ENCODE measurements at regions of chr10 and their contacts with region 1.

Region 1: DNA sequence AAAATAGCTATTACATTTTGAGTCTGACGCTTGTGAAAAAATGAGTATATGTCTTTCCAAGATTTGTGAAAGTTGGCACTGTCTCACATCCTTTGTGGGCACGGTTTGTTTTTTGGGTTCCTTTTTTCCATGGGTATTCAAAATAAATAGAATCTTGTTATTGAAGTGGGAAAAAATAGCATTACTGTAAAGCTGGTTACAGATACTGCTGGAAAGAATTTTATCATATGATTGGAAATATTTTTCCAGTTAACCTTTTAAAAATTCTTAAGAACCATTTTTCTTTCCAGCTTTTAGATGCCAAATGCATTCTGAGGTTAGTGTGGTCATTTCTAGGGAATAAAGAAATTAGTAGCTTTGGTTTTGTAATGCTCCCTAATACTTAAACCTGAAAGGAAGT is 11.4 kb downstream of the NET1 start:
- DNase-seq: no peak
- ATAC-seq: no peak
- H3K4me3 ChIP-seq: no peak overlapping the region
- H3K27ac ChIP-seq: no peak overlapping the region
- H3K4me1 ChIP-seq: no peaks in the 10 kb centered on the region
- H3K27me3 ChIP-seq: no peaks in the 10 kb centered on the region
- CTCF ChIP-seq: no peak
- EP300 ChIP-seq: no peak
- POLR2A ChIP-seq: no peak
- RAD21 ChIP-seq: no peak

Region 2: GRCh38 chr10:5413012-5413938 is 10.5 kb before region 1 on chr10:
- CTCF ChIA-PET with region 1: interaction called, 15 read pairs
- POLR2A ChIA-PET with region 1: interaction called, 3 read pairs
- RAD21 ChIA-PET with region 1: no interaction called
- SMC1A ChIA-PET with region 1: interaction called, 4 read pairs
- in situ Hi-C with region 1: no loop called
- intact Hi-C with region 1: no loop called
- DNase-seq: no peak
- ATAC-seq: peak; percentile 11
- H3K4me3 ChIP-seq: peak overlapping the region; percentile 68
- H3K27ac ChIP-seq: no peak overlapping the region; the same call in 1 of the 2 replicates
- H3K4me1 ChIP-seq: no peaks in the 10 kb centered on the region
- H3K27me3 ChIP-seq: peaks cover 0 to 4% of the 10 kb centered on the region in 2 experiments; a peak in 1 of 4 replicates
- CTCF ChIP-seq: no peak
- EP300 ChIP-seq: no peak
- POLR2A ChIP-seq: no peak
- RAD21 ChIP-seq: no peak

Region 3: GRCh38 chr10:5548527-5549223 is 124.9 kb after region 1 on chr10:
- CTCF ChIA-PET with region 1: no interaction called
- POLR2A ChIA-PET with region 1: no interaction called
- RAD21 ChIA-PET with region 1: no interaction called
- SMC1A ChIA-PET with region 1: no interaction called
- in situ Hi-C with region 1: no loop called
- intact Hi-C with region 1: no loop called
- DNase-seq: no peak
- ATAC-seq: peak; percentile 31; the same call in 2 of the 3 replicates
- H3K4me3 ChIP-seq: no peak overlapping the region
- H3K27ac ChIP-seq: no peak overlapping the region
- H3K4me1 ChIP-seq: peaks cover 13% of the 10 kb centered on the region
- H3K27me3 ChIP-seq: peaks cover 0 to 2% of the 10 kb centered on the region in 2 experiments; a peak in 2 of 4 replicates
- CTCF ChIP-seq: no peak
- EP300 ChIP-seq: no peak
- POLR2A ChIP-seq: no peak
- RAD21 ChIP-seq: no peak

Measured in GM12878 (cell line).